ENCODE measurements at regions of chr3 and their contacts with region 1.

Region 1: DNA sequence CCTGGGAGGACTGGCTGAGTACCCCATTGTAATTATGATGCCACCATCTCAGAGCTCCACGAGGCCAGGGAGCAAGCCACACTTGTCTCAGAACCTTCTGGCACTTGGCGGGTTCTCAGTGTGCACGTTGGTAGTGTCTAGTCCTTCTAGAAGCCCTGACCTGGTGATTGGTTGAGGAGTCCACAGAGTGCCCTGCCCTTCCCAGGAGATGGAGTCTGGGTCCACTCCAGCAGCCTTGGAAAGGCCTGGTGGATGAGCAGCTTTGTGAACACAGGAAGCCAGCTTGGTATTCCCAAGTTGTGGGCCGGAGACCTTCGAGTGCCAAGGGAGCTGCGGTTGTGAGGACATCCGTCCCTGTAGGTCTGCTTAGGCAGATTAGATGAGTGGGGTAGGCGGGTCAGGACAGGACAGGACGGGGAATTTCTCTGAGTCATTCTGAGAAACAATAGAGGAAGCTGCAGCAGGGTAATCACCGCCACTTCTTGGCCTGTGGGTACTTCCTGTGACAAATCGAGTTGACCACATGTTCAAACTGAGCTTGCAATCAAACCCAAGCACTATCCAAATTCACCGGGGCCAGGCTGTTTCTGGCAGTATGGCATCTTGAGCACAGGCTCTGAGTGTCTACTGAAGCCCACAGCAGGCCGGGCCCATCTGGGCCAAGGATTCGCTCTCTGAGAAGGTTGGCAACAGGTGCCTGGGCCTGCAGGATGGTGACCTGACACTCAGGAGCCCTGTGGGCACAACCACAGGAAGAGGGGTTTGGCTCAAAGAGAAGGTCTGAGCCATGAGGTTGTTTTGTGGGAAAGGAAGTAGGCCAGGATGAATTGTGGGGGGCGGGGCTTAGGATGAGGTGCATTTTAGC is 71.5 kb upstream of the PLXNA1 start:
- DNase-seq: peak; percentile 90 to 97
- H3K4me3 ChIP-seq: no peak overlapping the region
- H3K27ac ChIP-seq: peak overlapping the region; percentile 96
- H3K4me1 ChIP-seq: peaks cover 84% of the 10 kb centered on the region
- H3K27me3 ChIP-seq: no peaks in the 10 kb centered on the region
- CTCF ChIP-seq: no peak

Region 2: DNA sequence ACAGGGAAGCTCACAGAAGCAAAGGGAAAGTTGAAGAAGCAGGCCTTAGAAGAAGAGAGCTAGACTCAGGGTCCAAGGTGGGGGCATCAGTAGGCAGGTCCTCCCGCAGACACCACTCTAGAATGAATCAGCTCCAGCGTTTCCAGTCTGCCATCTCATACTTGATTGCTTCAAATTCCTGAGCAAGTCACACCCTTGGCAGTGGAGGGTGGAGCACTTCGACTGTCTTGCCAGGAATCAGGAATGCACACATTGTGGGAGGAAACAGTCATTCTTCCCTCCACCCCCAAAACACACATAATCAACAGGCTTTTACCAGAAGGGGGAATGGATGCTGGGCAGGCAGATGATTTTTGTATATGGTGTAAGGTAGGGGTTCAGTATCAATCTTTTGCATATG is 128.8 kb before region 1 on chr3:
- CTCF ChIA-PET with region 1: no interaction called
- POLR2A ChIA-PET with region 1: interaction called, 3 read pairs
- intact Hi-C with region 1: loop called (anchors 1 kb)
- DNase-seq: peak; percentile 86 to 90
- H3K4me3 ChIP-seq: no peak overlapping the region
- H3K27ac ChIP-seq: peak overlapping the region; percentile 88
- H3K4me1 ChIP-seq: peaks cover 27% of the 10 kb centered on the region
- H3K27me3 ChIP-seq: no peaks in the 10 kb centered on the region
- CTCF ChIP-seq: no peak

Region 3: DNA sequence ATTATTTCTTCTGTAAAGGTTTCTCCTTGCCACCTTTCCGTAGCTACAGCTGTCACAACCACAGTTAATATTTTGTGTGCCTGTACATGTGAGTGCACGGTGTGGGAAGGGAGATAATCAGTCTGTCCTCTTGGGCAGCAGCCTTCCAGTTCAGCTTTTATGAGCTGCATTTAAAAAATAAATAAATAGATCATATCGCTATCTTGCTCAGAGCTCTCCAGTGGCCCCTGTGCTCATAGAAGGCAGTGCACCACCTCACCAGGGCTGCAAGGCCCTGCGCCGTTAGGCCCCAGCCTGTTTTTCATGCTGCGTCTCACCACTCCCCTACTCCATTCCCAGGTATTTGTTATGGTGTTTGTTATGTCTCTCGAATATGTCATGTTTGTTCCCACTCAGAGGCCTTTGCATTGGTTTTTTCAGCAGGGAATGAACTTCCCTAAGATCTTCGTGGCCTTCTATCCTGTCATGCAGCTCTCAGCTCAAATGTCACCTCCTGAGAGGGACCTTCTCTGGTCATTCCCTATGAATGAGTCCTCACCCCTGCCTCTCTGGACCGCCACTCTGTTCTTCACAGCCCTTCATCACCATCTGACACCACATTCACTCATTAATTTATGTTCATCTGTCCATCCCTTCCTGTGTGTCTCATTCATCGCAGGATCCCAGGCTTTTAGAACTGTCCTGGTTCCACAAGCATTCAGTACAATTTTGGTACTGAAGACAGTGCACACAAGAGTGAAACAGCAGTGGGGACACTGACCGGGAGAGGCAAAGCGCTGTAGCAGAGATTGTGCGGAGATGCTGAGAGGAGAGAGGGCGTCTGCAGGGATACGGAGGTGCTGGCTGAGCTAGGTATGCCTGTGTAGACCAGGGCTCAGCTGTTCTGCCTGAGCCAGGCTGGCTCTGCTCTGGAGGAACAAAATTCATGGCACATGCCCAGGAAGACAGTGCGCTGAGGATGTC is 75.2 kb before region 1 on chr3:
- CTCF ChIA-PET with region 1: no interaction called
- POLR2A ChIA-PET with region 1: no interaction called
- intact Hi-C with region 1: loop called (anchors 1 kb)
- DNase-seq: peak in 1 of 2 experiments; percentile 18
- H3K4me3 ChIP-seq: no peak overlapping the region; the same call in 1 of the 2 replicates
- H3K27ac ChIP-seq: peak overlapping the region; percentile 62
- H3K4me1 ChIP-seq: peaks cover 23% of the 10 kb centered on the region
- H3K27me3 ChIP-seq: no peaks in the 10 kb centered on the region
- CTCF ChIP-seq: no peak; the same call in 1 of the 2 replicates

Region 4: DNA sequence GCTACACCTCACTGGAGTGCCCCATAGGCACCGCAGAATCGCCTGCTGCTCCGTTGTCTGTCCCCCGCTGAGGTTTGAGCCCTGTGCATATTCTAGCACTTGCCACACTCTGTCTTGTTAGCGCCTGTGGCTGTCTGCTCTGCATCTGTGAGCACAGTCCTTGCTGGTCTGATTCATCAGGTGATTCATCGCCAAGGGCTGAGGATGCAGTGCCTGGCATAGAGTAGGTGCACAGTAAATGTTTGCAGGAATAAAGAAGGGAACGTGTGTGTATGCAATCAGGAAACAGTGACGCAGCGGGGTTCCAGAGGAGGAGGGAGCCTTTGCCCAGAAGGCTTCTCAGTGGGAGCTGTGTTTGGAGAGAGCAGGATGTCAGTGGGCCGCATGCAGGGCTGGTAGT is 52.5 kb before region 1 on chr3:
- CTCF ChIA-PET with region 1: no interaction called
- POLR2A ChIA-PET with region 1: no interaction called
- intact Hi-C with region 1: loop called (anchors 2 kb)
- DNase-seq: peak; percentile 69 to 94
- H3K4me3 ChIP-seq: no peak overlapping the region
- H3K27ac ChIP-seq: peak overlapping the region; percentile 66
- H3K4me1 ChIP-seq: peaks cover 30% of the 10 kb centered on the region
- H3K27me3 ChIP-seq: no peaks in the 10 kb centered on the region
- CTCF ChIP-seq: no peak

Region 5: DNA sequence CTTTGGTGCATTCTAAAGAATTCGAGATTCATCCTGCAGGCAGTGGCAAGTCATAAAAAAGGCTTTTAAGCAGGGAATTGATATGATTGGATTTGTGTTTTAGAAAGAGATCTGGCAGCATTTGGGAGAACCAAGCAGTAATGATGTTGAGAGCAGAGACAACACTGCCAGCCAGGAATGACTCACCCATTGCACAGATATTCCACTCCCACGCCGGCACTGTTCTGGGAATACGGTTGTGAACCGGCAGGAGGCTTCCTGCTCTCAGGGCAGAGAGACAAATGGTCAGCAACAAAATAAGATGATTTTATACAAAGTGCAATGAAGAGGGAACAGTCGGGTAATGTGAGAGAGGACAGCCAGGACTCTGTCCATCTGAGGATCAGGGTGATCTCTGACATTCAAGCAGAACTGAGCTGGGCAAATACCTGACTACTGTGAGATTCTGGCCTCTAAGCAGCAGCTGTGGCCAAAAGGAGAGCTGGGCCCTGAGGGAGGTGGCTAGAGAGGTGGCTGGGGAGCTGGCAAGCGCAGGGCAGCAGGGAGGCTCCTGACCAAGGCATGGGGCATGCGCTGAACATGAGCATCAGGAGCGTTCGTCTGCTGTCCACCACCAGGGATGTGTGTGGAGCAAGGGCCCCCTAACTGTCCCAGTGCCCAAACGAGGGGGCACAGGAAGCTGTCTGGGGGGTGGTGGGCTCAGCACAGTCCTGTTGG is 15.4 kb after region 1 on chr3:
- CTCF ChIA-PET with region 1: no interaction called
- POLR2A ChIA-PET with region 1: no interaction called
- intact Hi-C with region 1: no loop called
- DNase-seq: no peak
- H3K4me3 ChIP-seq: no peak overlapping the region
- H3K27ac ChIP-seq: no peak overlapping the region
- H3K4me1 ChIP-seq: peaks cover 27% of the 10 kb centered on the region
- H3K27me3 ChIP-seq: no peaks in the 10 kb centered on the region
- CTCF ChIP-seq: no peak

Region 6: DNA sequence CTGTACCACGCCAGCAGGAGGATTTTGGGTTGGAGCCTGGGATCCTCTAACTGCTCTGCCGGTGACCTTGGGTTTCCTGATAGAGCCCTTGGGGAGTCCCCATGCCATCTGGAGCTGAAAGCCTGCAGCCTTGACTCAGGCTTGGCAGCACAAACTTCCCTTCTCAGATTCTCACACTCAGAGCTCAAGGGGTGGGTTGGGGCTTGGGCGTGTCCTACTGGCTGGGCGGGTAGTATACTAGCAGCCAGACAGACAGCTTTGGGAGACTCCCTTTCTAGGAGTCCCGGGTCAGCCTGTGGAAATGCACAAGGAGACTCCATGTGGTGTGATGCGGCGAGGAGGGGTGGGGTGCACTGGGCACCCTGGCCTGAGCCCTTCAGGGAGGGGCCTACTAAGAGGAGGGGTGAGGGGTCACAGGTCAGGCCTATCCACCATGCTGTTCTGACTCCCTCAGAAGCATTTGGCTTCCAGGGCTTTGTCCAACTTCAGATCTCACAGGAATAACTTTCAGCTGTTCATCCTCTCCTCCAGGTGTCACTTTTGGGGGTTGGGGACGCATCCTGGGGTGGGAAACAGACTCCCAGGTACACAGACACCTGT is 49.9 kb after region 1 on chr3:
- CTCF ChIA-PET with region 1: interaction called, 13 read pairs
- POLR2A ChIA-PET with region 1: interaction called, 6 read pairs
- intact Hi-C with region 1: loop called (anchors 1 kb)
- DNase-seq: peak; percentile 41 to 68
- H3K4me3 ChIP-seq: no peak overlapping the region
- H3K27ac ChIP-seq: peak overlapping the region; percentile 35
- H3K4me1 ChIP-seq: peaks cover 49% of the 10 kb centered on the region
- H3K27me3 ChIP-seq: no peaks in the 10 kb centered on the region
- CTCF ChIP-seq: no peak

Region 7: GRCh38 chr3:127226946-127227842 is 315.8 kb after region 1 on chr3:
- CTCF ChIA-PET with region 1: no interaction called
- POLR2A ChIA-PET with region 1: interaction called, 13 read pairs
- intact Hi-C with region 1: no loop called
- DNase-seq: peak in 1 of 2 experiments; percentile 50
- H3K4me3 ChIP-seq: no peak overlapping the region
- H3K27ac ChIP-seq: no peak overlapping the region
- H3K4me1 ChIP-seq: no peaks in the 10 kb centered on the region
- H3K27me3 ChIP-seq: no peaks in the 10 kb centered on the region
- CTCF ChIP-seq: no peak